Activated B cell treated with CpG ODN at 0.5 μM for 24 hours (primary cell): ENCODE measurements at regions of chr1 and their contacts with region 1.

Region 1: DNA sequence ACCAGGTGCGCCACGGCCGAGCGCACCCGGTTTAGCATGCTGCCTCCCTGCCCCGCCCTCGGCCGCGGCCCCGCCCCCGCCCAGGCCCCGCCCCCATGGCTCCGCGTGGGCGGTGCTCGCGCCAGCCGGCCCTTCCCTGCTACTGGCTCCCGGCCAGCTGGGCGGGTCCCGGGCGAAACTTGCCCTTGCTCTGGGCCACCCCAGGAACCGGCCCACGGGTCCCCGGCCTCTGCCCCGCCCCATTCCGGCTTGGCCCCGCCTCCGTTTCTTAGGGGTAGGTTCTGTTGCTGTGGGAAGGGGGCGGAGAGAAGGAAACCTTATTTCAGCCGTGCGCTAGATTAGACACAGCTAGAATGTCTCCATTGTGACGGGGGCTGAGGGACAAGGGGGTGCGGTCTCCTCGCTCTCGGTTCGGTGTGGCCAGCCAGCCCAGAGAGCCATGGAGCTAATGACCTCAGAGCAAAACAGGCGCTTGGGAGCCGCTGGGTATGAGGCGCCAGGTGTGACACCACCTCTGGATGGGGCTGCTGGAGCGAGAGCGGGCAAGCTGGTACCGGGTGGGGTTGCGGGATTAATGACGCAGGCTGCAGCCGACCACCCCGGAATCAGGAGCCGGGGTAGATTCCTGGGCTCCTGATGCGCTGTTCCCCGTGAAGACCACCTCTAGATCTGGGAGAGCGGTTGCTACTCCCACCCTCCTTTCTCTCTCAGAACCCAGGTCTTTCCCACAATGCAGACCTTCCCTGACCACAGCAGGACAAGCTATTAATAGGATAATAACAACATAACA is at the start of gene PPM1J:
- DNase-seq: peak; percentile 99
- ATAC-seq: peak; percentile 88
- H3K4me3 Mint-ChIP-seq: peak within 1 kb of the TSS; percentile 84
- H3K27ac Mint-ChIP-seq: peak within 1 kb of the TSS; percentile 74
- H3K4me1 Mint-ChIP-seq: peaks cover 37% of the 10 kb centered on the region
- H3K27me3 Mint-ChIP-seq: peaks cover 5% of the 10 kb centered on the region
- CTCF ChIP-seq: no peak
- total RNA-seq, gene PPM1J: 0.46 and 0.75 TPM in 2 replicates

Region 2: GRCh38 chr1:112466078-112466660 is 249.3 kb before region 1 on chr1:
- CTCF ChIA-PET with region 1: interaction called, 3 read pairs
- POLR2A ChIA-PET with region 1: interaction called, 3 read pairs
- intact Hi-C with region 1: loop called (anchors 1 kb)
- DNase-seq: peak; percentile 81
- ATAC-seq: peak; percentile 93
- H3K4me3 Mint-ChIP-seq: peak overlapping the region; percentile 77
- H3K27ac Mint-ChIP-seq: peak overlapping the region; percentile 88
- H3K4me1 Mint-ChIP-seq: peaks cover 54% of the 10 kb centered on the region
- H3K27me3 Mint-ChIP-seq: peaks cover 16% of the 10 kb centered on the region
- CTCF ChIP-seq: no peak

Region 3: GRCh38 chr1:112803906-112804762 is 88.7 kb after region 1 on chr1:
- CTCF ChIA-PET with region 1: interaction called, 59 read pairs
- POLR2A ChIA-PET with region 1: no interaction called
- intact Hi-C with region 1: loop called (anchors 1 kb)
- DNase-seq: peak; percentile 27
- ATAC-seq: peak; percentile 82
- H3K4me3 Mint-ChIP-seq: no peak overlapping the region
- H3K27ac Mint-ChIP-seq: no peak overlapping the region
- H3K4me1 Mint-ChIP-seq: no peaks in the 10 kb centered on the region
- H3K27me3 Mint-ChIP-seq: peaks cover 3% of the 10 kb centered on the region
- CTCF ChIP-seq: no peak

Region 4: GRCh38 chr1:112955781-112956543 is 240.5 kb after region 1 on chr1 and contains the start of gene SLC16A1:
- CTCF ChIA-PET with region 1: interaction called, 6 read pairs
- POLR2A ChIA-PET with region 1: interaction called, 5 read pairs
- intact Hi-C with region 1: loop called (anchors 1 kb)
- DNase-seq: peak; percentile 89
- ATAC-seq: peak; percentile 82
- H3K4me3 Mint-ChIP-seq: peak within 1 kb of the TSS; percentile 98
- H3K27ac Mint-ChIP-seq: peak within 1 kb of the TSS; percentile 98
- H3K4me1 Mint-ChIP-seq: peaks cover 49% of the 10 kb centered on the region
- H3K27me3 Mint-ChIP-seq: no peaks in the 10 kb centered on the region
- CTCF ChIP-seq: no peak
- total RNA-seq, gene SLC16A1: 17.8 and 17.9 TPM in 2 replicates

Region 5: GRCh38 chr1:113140588-113141446 is 425.4 kb after region 1 on chr1:
- CTCF ChIA-PET with region 1: interaction called, 3 read pairs
- POLR2A ChIA-PET with region 1: no interaction called
- intact Hi-C with region 1: loop called (anchors 1 kb)
- DNase-seq: no peak
- ATAC-seq: peak; percentile 76
- H3K4me3 Mint-ChIP-seq: peak overlapping the region; percentile 42
- H3K27ac Mint-ChIP-seq: no peak overlapping the region
- H3K4me1 Mint-ChIP-seq: peaks cover 4% of the 10 kb centered on the region
- H3K27me3 Mint-ChIP-seq: no peaks in the 10 kb centered on the region
- CTCF ChIP-seq: peak; percentile 19

Region 6: DNA sequence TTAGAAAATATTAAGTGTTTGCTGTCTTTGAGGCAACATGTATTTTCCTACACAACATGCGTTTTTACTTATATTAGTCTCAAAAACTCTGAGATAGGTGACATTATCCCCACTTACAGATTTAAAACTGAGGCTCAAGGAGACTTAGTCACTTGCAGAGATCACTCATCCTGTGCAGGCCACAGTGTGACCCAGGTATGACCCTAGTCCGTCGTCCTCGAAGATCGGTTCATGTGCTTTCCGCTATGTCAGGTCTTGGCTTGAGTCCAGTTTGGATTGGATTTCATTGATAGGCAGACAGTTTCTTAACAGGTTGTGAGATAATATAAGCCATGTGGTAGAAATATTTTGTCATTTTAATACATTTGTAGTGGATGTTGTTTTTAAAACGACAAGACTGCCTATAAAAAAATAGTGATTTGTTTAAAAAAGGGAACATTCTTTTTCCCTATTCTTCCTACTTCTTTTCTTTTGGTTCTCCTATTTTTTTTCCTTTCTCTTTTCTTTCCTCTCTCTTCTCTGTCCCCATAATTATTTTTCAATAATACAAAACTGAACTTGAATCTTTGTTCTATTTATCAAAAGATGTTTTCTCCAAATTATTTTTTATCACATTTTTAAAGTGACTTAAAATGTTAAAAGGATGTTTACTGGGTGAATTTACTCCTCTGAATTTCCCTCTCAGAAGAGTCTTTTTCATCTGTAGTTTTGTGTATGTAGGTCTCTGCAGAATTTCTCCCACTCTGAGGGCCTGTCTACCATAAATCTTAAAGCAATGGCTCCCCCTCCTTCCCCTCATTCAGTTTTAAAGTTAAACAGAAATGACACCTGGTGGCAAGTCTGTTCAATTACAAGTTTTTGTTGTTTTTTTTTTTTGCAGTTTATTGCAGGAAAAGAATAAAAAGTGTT is 962.0 kb after region 1 on chr1:
- CTCF ChIA-PET with region 1: interaction called, 10 read pairs
- POLR2A ChIA-PET with region 1: no interaction called
- intact Hi-C with region 1: no loop called
- DNase-seq: no peak
- ATAC-seq: peak; percentile 34
- H3K4me3 Mint-ChIP-seq: no peak overlapping the region
- H3K27ac Mint-ChIP-seq: no peak overlapping the region
- H3K4me1 Mint-ChIP-seq: no peaks in the 10 kb centered on the region
- H3K27me3 Mint-ChIP-seq: no peaks in the 10 kb centered on the region
- CTCF ChIP-seq: no peak

Region 7: GRCh38 chr1:114282751-114283403 is 1567.4 kb after region 1 on chr1:
- CTCF ChIA-PET with region 1: no interaction called
- POLR2A ChIA-PET with region 1: no interaction called
- intact Hi-C with region 1: loop called (anchors 5 kb)
- DNase-seq: peak; percentile 56
- ATAC-seq: peak; percentile 74
- H3K4me3 Mint-ChIP-seq: no peak overlapping the region
- H3K27ac Mint-ChIP-seq: no peak overlapping the region
- H3K4me1 Mint-ChIP-seq: no peaks in the 10 kb centered on the region
- H3K27me3 Mint-ChIP-seq: peaks cover 2% of the 10 kb centered on the region
- CTCF ChIP-seq: no peak